BJ (cell line): ENCODE measurements at regions of chr6 and their contacts with region 1.

Region 1: GRCh38 chr6:148240461-148240840 is 102.2 kb upstream of the SASH1 start:
- DNase-seq: peak; percentile 60
- H3K4me3 ChIP-seq: no peak overlapping the region
- H3K27me3 ChIP-seq: no peaks in the 10 kb centered on the region
- CTCF ChIP-seq: no peak

Region 2: DNA sequence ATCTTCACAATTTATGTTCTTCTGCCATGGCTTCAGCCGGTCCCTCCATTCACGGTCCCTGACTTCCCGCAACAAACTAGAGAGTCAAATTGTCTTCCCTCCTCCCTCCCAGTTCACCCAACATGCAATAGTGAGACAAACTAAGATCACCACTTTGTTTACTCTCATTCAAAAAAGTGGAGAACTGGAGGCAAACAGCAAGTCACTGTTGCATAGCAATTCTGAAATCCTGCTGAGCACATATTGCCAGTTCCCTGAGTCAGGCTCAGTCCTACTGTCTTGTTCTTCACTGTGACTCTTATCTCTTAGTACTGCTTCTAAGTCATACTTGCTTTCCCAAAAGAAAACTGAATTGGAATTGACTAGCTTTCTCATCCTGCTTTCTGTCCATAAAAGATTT is 185.0 kb before region 1 on chr6:
- CTCF ChIA-PET with region 1: no interaction called
- POLR2A ChIA-PET with region 1: no interaction called
- DNase-seq: no peak
- H3K4me3 ChIP-seq: no peak overlapping the region
- H3K27me3 ChIP-seq: no peaks in the 10 kb centered on the region
- CTCF ChIP-seq: no peak

Region 3: DNA sequence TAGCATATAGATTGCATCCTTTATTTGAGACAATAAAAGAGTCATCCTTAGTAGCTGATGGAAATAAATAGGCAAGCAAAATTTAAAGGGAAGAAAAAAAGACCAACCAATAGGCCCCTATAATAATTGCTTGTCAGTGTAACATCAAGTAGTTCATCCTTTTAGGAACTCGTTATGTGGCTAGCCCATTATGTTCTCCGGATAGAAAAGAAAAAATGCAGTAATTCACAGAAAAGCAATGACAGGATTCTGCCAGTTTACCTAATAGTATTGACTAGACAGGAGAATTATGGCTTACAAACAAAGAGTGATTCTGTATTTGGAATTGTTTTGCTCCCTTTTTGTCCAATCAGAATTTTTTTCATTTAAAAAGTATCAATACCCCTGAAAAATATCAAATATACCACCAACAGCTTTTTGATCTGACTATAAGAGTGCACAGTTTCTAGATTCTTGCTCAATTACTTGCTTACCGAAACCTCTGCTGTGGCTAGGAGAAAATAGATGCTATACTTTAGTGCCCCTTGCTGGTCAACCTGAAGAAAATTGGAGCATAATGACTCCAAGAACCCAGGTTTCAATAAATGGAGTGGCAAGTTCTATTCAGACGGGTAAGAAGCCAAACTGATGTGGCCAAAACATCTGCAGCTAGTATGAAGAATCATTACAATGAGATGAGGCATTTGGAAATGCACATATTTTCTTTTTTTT is 10.7 kb after region 1 on chr6:
- CTCF ChIA-PET with region 1: interaction called, 12 read pairs
- POLR2A ChIA-PET with region 1: interaction called, 3 read pairs
- DNase-seq: no peak
- H3K4me3 ChIP-seq: no peak overlapping the region
- H3K27me3 ChIP-seq: no peaks in the 10 kb centered on the region
- CTCF ChIP-seq: peak; percentile 53

Region 4: GRCh38 chr6:148682990-148683389 is 442.5 kb after region 1 on chr6:
- CTCF ChIA-PET with region 1: no interaction called
- POLR2A ChIA-PET with region 1: no interaction called
- DNase-seq: no peak
- H3K4me3 ChIP-seq: no peak overlapping the region
- H3K27me3 ChIP-seq: no peaks in the 10 kb centered on the region
- CTCF ChIP-seq: no peak